ENCODE measurements at regions of chr15 and their contacts with region 1.

Region 1: GRCh38 chr15:57751177-57751800 is 44.8 kb downstream of the POLR2M start:
- DNase-seq: no peak
- H3K4me3 ChIP-seq: no peak overlapping the region
- H3K27ac ChIP-seq: no peak overlapping the region
- H3K4me1 ChIP-seq: peaks cover 9 to 12% (median 10%) of the 10 kb centered on the region in 4 experiments
- H3K27me3 ChIP-seq: no peaks in the 10 kb centered on the region
- CTCF ChIP-seq: peak in 2 of 3 experiments; percentile 67 to 78; a peak in 3 of 4 replicates
- EP300 ChIP-seq: no peak
- POLR2A ChIP-seq: no peak
- RAD21 ChIP-seq: peak; percentile 76 to 82

Region 2: GRCh38 chr15:57235873-57236272 is 515.4 kb before region 1 on chr15:
- CTCF ChIA-PET with region 1: no interaction called
- POLR2A ChIA-PET with region 1: no interaction called
- DNase-seq: no peak
- H3K4me3 ChIP-seq: no peak overlapping the region
- H3K27ac ChIP-seq: 0 out of 2 replicates have a peak overlapping the region, but pooled peaks have one; percentile 32
- H3K4me1 ChIP-seq: peaks cover 0 to 11% (median 3%) of the 10 kb centered on the region in 4 experiments; a peak in 3 of 7 replicates
- H3K27me3 ChIP-seq: no peaks in the 10 kb centered on the region
- CTCF ChIP-seq: no peak
- EP300 ChIP-seq: no peak
- POLR2A ChIP-seq: no peak
- RAD21 ChIP-seq: no peak

Region 3: DNA sequence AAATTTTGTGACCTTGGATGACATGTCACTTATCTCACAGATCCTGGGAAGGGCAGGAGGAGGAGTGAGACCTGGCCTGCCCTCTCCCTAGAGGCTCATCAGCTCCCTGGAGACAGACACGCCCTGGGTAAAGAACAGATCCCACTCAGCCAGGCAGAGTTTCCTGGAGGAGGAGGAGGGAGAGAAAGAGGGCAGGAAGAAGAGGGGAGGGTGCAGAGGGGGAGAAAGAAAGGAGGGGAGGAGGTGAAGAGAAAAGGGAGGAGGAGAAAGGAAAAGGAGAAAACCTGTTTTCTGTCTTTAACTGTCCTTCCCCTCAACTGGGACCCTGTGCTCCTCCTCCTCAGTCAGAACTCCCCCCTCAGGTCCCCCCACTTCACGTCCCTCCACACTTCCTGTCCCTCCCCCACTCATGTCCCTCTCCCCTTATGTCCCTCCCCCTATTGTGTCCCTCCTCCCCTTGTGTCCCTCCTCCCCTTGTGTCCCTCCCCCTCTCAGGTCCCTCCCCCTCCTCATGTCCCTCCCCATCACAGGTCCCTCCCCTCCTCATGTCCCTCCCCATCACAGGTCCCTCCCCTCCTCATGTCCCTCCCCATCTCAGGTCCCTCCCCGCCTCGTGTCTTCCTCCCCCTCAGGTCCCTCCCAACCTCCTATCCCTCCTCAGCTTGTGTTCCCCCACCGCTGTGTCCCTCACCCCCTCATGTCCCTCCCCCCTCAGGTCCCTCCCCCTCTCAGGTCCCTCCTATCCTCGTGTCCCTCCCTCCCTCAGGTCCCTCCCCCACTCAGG is 427.3 kb before region 1 on chr15:
- CTCF ChIA-PET with region 1: no interaction called
- POLR2A ChIA-PET with region 1: no interaction called
- DNase-seq: no peak
- H3K4me3 ChIP-seq: no peak overlapping the region
- H3K27ac ChIP-seq: no peak overlapping the region
- H3K4me1 ChIP-seq: peaks cover 2 to 13% (median 5%) of the 10 kb centered on the region in 4 experiments; a peak in 6 of 7 replicates
- H3K27me3 ChIP-seq: no peaks in the 10 kb centered on the region; a peak in 1 of 7 replicates
- CTCF ChIP-seq: no peak
- EP300 ChIP-seq: no peak
- POLR2A ChIP-seq: no peak
- RAD21 ChIP-seq: no peak

Region 4: GRCh38 chr15:57762302-57762701 is 11.0 kb after region 1 on chr15:
- CTCF ChIA-PET with region 1: interaction called, 39 read pairs
- POLR2A ChIA-PET with region 1: no interaction called
- DNase-seq: no peak
- H3K4me3 ChIP-seq: no peak overlapping the region
- H3K27ac ChIP-seq: no peak overlapping the region
- H3K4me1 ChIP-seq: no peaks in the 10 kb centered on the region
- H3K27me3 ChIP-seq: no peaks in the 10 kb centered on the region
- CTCF ChIP-seq: peak in 2 of 3 experiments; percentile 15 to 24; a peak in 2 of 4 replicates
- EP300 ChIP-seq: no peak
- POLR2A ChIP-seq: no peak
- RAD21 ChIP-seq: 0 out of 4 replicates have a peak, but pooled peaks of 1 of the 2 experiments have one; percentile 1

Region 5: GRCh38 chr15:57777003-57777402 is 25.7 kb after region 1 on chr15:
- CTCF ChIA-PET with region 1: interaction called, 18 read pairs
- POLR2A ChIA-PET with region 1: no interaction called
- DNase-seq: no peak
- H3K4me3 ChIP-seq: no peak overlapping the region
- H3K27ac ChIP-seq: no peak overlapping the region
- H3K4me1 ChIP-seq: peaks cover 0 to 6% (median 5%) of the 10 kb centered on the region in 4 experiments; a peak in 3 of 7 replicates
- H3K27me3 ChIP-seq: no peaks in the 10 kb centered on the region
- CTCF ChIP-seq: no peak
- EP300 ChIP-seq: no peak
- POLR2A ChIP-seq: no peak
- RAD21 ChIP-seq: no peak

Region 6: GRCh38 chr15:57816599-57816998 is 65.3 kb after region 1 on chr15:
- CTCF ChIA-PET with region 1: interaction called, 12 read pairs
- POLR2A ChIA-PET with region 1: no interaction called
- DNase-seq: no peak
- H3K4me3 ChIP-seq: no peak overlapping the region
- H3K27ac ChIP-seq: no peak overlapping the region
- H3K4me1 ChIP-seq: no peaks in the 10 kb centered on the region
- H3K27me3 ChIP-seq: no peaks in the 10 kb centered on the region
- CTCF ChIP-seq: no peak
- EP300 ChIP-seq: no peak
- POLR2A ChIP-seq: no peak
- RAD21 ChIP-seq: no peak

Region 7: DNA sequence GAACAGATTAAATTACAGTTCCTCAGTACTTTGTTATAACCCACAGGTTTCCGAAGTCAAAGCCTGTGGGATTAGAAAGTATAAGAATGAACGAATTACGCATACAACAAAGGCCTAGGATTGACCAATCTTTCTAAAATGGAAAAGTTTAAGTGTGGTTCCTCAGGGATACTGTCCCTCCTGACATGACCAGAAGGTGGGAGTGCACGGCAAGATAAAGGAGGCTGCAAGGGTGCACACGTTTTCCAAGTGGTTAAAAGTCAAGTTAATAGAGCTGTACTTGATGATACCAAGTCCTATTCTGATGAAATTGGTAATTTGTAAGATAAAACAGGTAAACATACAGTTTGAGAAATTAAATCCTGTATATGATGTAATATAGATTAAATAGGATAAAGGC is 218.1 kb after region 1 on chr15:
- CTCF ChIA-PET with region 1: no interaction called
- POLR2A ChIA-PET with region 1: no interaction called
- DNase-seq: no peak
- H3K4me3 ChIP-seq: no peak overlapping the region
- H3K27ac ChIP-seq: no peak overlapping the region
- H3K4me1 ChIP-seq: no peaks in the 10 kb centered on the region
- H3K27me3 ChIP-seq: no peaks in the 10 kb centered on the region; a peak in 1 of 7 replicates
- CTCF ChIP-seq: peak; percentile 28 to 50 (median 44); a peak in 3 of 4 replicates
- EP300 ChIP-seq: no peak
- POLR2A ChIP-seq: no peak
- RAD21 ChIP-seq: peak; percentile 67 to 69

Region 8: DNA sequence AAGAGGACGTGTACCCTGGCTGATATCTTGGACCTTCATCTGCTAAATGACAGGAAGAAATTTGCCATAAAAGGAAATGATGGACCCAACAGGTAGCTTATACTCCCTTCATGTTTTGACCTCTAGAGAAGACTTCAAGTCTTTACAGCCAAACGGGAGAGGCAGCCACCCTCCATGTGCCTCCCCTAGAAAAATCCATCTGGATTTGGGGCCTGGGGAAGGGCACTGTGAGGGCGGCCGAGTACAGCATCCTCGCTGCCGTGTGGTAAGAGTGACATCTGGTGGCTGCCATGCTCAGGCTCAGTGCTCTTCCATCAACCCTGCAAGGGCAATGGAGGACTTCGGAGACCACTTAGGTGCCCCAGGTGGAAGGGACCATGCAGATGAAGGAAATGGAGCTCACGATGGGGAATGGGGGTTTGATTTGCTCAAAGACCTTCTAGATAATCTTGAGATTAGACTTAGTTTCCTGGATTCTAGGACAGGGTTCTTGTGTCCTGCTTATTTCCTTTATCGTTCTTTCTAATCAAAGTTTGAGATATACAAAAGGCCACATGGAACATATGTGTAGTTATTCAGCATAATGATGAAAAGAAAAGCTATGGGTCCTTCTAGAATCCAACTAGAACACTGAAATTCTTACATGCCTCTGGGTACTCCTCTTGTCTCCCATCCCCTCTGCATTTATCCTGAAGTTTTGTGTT is 431.3 kb after region 1 on chr15:
- CTCF ChIA-PET with region 1: interaction called, 21 read pairs
- POLR2A ChIA-PET with region 1: no interaction called
- DNase-seq: peak; percentile 36 to 73
- H3K4me3 ChIP-seq: no peak overlapping the region
- H3K27ac ChIP-seq: no peak overlapping the region
- H3K4me1 ChIP-seq: no peaks in the 10 kb centered on the region
- H3K27me3 ChIP-seq: peaks cover 0 to 2% (median 0%) of the 10 kb centered on the region in 4 experiments; a peak in 1 of 7 replicates
- CTCF ChIP-seq: peak; percentile 95 to 97 (median 96)
- EP300 ChIP-seq: no peak
- POLR2A ChIP-seq: no peak
- RAD21 ChIP-seq: peak; percentile 99 to 100